PC-3 (cell line): ENCODE measurements at regions of chr5 and their contacts with region 1.

Region 1: GRCh38 chr5:178793151-178793550 is 62.7 kb upstream of the ZNF354A start:
- DNase-seq: peak; percentile 63
- ATAC-seq: peak; percentile 88
- H3K4me3 ChIP-seq: no peak overlapping the region
- H3K27ac ChIP-seq: no peak overlapping the region
- H3K4me1 ChIP-seq: peaks cover 2% of the 10 kb centered on the region
- H3K27me3 ChIP-seq: peaks cover 13% of the 10 kb centered on the region; the same call in 1 of the 2 replicates
- CTCF ChIP-seq: peak; percentile 69

Region 2: GRCh38 chr5:178838695-178839685 is 45.8 kb after region 1 on chr5:
- CTCF ChIA-PET with region 1: no interaction called
- POLR2A ChIA-PET with region 1: no interaction called
- intact Hi-C with region 1: loop called (anchors 1 kb)
- DNase-seq: peak; percentile 82
- ATAC-seq: peak; percentile 98
- H3K4me3 ChIP-seq: no peak overlapping the region
- H3K27ac ChIP-seq: no peak overlapping the region
- H3K4me1 ChIP-seq: no peaks in the 10 kb centered on the region
- H3K27me3 ChIP-seq: peaks cover 10% of the 10 kb centered on the region; the same call in 1 of the 2 replicates
- CTCF ChIP-seq: peak; percentile 89